ENCODE measurements at regions of chr3 and their contacts with region 1.

Region 1: GRCh38 chr3:57755668-57756527 is at the start of gene SLMAP:
- DNase-seq: peak; percentile 98
- H3K4me3 Mint-ChIP-seq: peak within 1 kb of the TSS; percentile 98
- H3K27ac Mint-ChIP-seq: peak within 1 kb of the TSS; percentile 96
- H3K4me1 Mint-ChIP-seq: peaks cover 27% of the 10 kb centered on the region
- H3K27me3 Mint-ChIP-seq: peaks cover 9% of the 10 kb centered on the region
- total RNA-seq, gene SLMAP: 53.4 and 58.1 TPM in 2 replicates

Region 2: DNA sequence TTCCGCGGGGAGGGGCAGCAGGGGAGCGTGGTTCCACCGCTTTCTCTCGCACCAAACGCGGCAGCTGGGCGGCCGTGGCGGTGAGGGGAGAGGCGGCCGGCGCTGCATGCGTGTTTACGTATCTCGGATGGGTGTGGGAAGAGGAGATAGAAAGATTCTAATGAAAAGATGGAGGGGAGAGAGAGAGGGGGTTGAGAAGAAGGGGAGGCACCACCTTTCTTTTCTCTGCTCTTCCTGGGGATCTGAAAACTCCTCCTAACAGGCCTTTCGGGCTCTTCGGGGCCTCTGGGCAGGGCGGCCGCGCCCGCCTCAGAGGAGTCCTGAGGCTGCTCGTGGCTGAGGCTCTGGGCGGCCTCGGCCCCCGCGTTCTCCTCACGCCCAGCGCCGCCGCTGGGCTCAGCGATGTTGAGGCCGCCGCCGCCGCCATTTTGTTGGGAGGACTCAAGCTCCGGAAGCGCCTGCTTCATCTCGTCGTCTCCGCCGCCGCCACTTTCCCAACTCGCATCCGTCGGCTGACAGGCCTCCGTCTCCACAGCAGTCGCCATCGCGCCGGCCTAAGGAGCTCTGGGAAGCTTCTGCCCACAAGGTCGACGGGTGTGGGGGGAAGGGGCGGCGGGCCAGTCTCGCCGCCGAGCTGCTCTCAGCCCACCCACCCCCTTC is 1073.3 kb before region 1 on chr3:
- intact Hi-C with region 1: loop called (anchors 5 kb)
- DNase-seq: peak; percentile 94
- H3K4me3 Mint-ChIP-seq: peak overlapping the region; percentile 100
- H3K27ac Mint-ChIP-seq: peak overlapping the region; percentile 99
- H3K4me1 Mint-ChIP-seq: peaks cover 29% of the 10 kb centered on the region
- H3K27me3 Mint-ChIP-seq: no peaks in the 10 kb centered on the region

Region 3: DNA sequence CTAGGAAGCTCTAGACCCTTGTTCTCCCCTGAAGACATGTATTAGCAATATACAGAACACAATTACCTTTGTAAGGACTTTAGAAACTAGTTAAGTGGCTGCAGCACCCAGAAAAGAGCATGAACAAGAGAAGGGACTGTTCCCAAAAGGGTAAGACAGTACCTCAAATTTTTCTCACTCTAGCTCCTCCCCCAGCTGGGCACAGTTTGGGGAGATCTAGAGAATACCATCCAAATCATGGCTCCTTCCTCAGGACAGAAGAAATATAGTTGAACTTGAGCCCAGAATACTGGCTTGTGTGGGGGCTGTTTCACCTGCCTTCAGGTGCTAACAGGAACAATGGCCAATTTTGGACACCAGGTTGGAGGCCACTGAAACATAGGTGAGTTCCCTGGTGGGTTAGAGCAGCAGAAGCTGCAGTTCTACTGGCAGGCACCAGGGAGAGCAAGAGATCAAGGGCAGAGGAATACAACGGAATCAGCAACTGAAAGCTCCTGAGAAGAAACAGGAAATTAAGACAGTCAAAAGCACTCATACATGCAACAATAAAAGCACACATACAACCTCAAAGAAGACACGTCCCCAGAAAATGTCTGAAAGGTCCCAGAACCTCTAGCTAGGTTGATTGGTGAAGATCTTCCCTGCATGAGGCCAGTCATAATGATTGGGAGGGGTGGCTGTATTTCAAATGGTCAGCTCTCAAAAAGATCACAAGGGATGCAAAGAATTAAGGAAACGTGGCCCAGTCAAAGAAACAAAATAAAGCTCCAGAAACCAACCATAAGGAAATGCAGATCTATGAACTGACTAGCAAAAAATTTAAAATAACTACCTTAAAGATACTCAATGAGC is 358.5 kb before region 1 on chr3:
- intact Hi-C with region 1: loop called (anchors 1 kb)
- DNase-seq: peak; percentile 90
- H3K4me3 Mint-ChIP-seq: no peak overlapping the region
- H3K27ac Mint-ChIP-seq: peak overlapping the region; percentile 14
- H3K4me1 Mint-ChIP-seq: peaks cover 11% of the 10 kb centered on the region
- H3K27me3 Mint-ChIP-seq: peaks cover 18% of the 10 kb centered on the region

Region 4: DNA sequence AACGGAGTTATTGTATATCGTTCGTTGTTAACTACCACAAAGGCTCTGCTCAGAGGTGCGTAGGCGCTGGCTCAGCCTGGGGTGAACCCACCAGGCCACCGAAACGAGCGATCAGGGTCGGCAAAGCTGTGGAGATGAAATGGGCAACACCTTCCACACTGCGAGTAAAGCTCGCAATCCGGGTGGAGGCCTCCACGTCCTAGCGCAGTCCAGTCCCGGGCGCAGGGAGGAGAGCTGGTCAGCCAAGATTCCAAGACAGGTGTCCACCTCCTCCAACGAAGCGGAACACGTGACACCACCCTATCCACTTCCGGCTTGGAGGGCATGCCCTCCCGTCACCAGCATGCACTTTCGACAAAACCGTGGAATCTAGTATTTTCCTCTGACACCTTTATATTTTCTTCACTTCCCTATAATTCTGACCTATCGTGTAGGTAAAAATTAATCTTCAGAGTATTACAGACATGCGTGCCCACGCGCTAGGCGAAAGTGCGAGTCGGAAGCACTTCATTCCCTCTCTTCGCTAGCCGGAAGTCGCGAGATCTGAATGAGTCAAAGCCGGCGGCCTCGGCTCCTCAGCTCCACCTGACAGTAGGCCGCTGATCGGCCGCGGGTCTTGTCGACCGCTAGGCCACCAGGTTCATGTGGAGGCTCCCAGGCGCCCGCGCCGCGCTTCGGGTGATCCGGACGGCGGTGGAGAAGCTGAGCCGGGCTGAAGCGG is 200.0 kb before region 1 on chr3 and contains the start of gene PDE12:
- intact Hi-C with region 1: loop called (anchors 1 kb)
- DNase-seq: peak; percentile 94
- H3K4me3 Mint-ChIP-seq: peak within 1 kb of the TSS; percentile 79
- H3K27ac Mint-ChIP-seq: peak within 1 kb of the TSS; percentile 97
- H3K4me1 Mint-ChIP-seq: peaks cover 32% of the 10 kb centered on the region
- H3K27me3 Mint-ChIP-seq: no peaks in the 10 kb centered on the region
- total RNA-seq, gene PDE12: 34.4 TPM in 2 replicates

Region 5: DNA sequence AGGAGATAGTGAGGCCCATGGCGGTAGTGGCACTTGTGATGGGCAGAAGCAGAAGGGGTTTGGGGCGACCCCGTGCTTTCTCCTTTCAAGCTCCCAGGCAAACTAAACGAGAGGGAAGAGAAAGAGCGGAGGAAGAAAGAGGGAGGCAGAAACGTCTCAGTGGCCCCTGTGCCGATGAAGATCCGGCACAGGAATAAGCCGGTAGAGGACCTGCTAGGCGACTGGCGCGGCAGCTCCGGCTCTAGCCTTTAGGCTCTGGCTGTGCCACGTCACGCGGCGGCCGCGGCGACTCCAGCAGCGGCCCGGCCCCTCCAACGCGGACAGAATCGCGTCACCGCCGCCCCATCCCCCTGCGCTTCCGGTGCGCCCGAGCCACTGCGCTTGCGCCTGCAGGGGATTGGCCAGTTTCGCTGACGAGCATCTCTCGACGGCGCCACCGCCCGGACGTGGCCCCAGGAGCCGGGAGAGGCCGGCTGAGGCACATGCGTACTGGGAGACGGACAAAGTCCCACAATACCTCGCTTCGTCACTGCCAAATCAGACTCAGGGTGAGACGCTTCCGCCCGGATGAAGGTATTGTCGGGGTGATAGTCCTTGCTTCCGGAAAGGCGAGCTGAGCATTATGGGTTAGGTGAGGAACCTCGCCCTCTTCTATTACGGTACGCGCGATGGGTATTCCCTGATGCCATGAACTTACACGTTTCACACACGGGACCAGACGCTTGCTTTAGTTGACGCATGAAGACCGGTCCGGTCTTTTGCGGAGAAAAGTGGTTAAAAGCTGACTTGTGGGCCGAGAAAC is 158.6 kb before region 1 on chr3 and contains the start of gene ARF4:
- intact Hi-C with region 1: loop called (anchors 1 kb)
- DNase-seq: peak; percentile 100
- H3K4me3 Mint-ChIP-seq: peak within 1 kb of the TSS; percentile 87
- H3K27ac Mint-ChIP-seq: peak within 1 kb of the TSS; percentile 99
- H3K4me1 Mint-ChIP-seq: peaks cover 32% of the 10 kb centered on the region
- H3K27me3 Mint-ChIP-seq: no peaks in the 10 kb centered on the region
- total RNA-seq, gene ARF4: 84.4 and 91.4 TPM in 2 replicates

Region 6: GRCh38 chr3:57692259-57693147 is 63.4 kb before region 1 on chr3 and contains the start of gene DENND6A:
- intact Hi-C with region 1: loop called (anchors 1 kb)
- DNase-seq: peak; percentile 98
- H3K4me3 Mint-ChIP-seq: peak within 1 kb of the TSS; percentile 87
- H3K27ac Mint-ChIP-seq: peak within 1 kb of the TSS; percentile 96
- H3K4me1 Mint-ChIP-seq: peaks cover 22% of the 10 kb centered on the region
- H3K27me3 Mint-ChIP-seq: no peaks in the 10 kb centered on the region
- total RNA-seq, gene DENND6A: 20.8 and 25.2 TPM in 2 replicates

Region 7: DNA sequence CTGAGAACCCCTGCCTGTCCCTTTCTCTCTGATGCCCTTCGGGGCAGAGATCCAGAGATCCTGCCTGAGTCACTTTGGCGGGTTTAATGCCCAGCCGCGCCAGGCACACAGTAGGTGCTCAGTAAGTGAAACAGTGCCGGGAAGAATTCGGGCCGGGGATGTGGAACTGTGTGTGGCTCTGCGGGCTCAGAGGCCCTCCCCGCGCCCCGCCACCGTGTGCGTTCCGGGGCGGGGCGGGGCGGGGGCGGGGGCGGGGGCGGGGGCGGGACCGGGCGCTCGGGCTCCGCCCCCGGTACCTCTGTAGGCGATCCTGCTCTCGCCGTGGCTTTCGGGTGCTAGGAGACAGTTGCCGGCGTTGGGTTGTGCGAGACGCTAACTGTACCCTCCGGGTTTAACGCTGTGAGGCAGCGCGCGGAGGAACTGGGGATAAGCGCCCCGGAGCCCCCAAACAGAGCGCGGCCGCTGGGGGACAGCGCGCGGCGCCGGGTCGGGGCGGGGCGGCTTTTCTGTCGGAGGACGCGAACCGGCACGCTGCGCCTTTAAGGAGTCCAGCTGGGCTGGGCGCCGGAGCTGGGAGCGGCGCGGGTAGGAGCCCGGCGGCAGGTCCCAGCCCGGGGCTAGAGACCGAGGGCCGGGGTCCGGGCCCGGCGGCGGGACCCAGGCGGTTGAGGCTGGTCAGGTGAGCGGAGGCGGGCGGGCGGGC is 481.5 kb after region 1 on chr3 and contains the start of gene ABHD6:
- intact Hi-C with region 1: loop called (anchors 10 kb)
- DNase-seq: peak; percentile 95
- H3K4me3 Mint-ChIP-seq: peak within 1 kb of the TSS; percentile 94
- H3K27ac Mint-ChIP-seq: peak within 1 kb of the TSS; percentile 83
- H3K4me1 Mint-ChIP-seq: peaks cover 15% of the 10 kb centered on the region
- H3K27me3 Mint-ChIP-seq: peaks cover 27% of the 10 kb centered on the region
- total RNA-seq, gene ABHD6: 9.8 and 10.8 TPM in 2 replicates

Measured in activated CD4-positive, alpha-beta T cell treated with anti-CD3 and anti-CD28 coated beads, Interleukin-2, amount 10 ng/mL, durations not matched to agents 24 days and 14 days (primary cell).